Posterior cingulate gyrus (tissue), 11 donors: ENCODE measurements at regions of chr7 and their contacts with region 1.

Region 1: DNA sequence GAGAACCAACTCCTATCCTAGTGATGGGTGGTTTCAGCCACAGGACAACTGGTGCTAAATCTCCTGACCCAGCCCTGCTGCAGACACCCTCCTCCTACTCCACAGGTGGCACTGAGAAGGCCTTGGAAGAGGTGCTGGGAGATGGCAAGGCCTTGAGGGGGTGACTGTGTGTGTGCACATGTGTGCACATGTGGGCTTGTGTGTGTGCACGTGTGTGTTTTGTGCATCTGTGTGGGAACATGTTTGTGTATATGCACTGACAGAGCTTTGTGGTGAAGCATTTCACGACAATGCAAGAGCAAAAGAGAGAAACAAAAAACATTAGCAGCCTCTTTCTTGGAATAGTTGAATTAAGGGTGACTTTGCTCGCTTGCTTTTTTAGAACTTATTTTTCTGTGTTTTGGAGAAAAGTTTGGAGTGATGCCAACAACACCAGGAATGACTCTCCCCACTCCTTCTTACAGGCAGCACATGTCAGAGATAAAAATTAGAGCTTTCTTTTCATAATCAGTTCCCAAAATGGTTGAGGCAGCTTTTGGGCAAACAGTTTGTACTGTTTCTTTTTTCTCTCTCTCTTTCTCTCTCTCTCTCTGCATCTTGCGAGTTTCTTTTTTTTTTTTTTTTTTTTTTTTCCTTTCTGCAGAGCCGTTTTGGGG is 69.5 kb downstream of the SEC61G start:
- DNase-seq: no peak

Region 2: GRCh38 chr7:54743580-54743979 is 54.1 kb after region 1 on chr7:
- intact Hi-C with region 1: loop called (anchors 10 kb)
- DNase-seq: no peak

Region 3: GRCh38 chr7:54758702-54759592 is 69.4 kb after region 1 on chr7 and contains the start of gene SEC61G:
- intact Hi-C with region 1: no loop called
- DNase-seq: peak; percentile 94 to 99 (median 96)

Region 4: DNA sequence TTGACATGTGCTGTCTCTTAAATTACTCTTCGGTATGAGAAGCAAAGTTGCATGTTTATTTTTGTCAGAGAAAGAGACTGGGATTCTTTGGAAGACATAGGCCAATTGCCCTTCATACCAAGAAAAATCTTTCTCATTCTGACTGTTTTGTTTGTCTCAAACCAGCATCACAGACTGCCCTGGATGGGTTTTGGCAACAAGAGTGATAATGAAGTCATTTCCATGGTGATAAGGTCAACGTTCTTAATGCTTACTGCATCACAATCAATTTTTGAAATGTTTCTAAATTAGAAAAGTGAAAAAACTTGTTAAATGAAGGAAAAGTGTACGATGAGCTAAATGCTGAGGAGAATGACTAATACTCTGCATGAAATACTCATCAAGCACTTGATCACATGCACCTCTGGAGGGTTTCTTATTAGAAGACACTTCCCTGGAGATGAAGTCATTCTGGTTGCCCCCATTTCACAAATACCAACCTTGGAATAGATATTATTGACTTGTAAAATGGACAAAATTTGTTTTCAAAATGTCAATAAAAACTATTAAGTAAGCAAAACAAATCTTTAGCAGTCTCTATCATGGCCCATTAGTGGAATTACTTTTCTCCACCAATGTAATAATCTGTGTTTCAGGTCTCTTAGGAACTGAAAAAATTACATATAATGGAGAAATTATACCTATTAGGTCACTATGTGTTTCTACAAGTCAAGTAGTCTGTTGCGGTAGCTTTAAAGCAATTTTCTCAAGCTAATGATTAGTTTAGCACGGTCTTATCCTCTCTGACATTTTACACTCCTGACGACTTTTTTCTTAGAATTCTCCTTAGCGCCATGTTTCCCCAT is 89.4 kb after region 1 on chr7:
- intact Hi-C with region 1: no loop called
- DNase-seq: no peak

Region 5: DNA sequence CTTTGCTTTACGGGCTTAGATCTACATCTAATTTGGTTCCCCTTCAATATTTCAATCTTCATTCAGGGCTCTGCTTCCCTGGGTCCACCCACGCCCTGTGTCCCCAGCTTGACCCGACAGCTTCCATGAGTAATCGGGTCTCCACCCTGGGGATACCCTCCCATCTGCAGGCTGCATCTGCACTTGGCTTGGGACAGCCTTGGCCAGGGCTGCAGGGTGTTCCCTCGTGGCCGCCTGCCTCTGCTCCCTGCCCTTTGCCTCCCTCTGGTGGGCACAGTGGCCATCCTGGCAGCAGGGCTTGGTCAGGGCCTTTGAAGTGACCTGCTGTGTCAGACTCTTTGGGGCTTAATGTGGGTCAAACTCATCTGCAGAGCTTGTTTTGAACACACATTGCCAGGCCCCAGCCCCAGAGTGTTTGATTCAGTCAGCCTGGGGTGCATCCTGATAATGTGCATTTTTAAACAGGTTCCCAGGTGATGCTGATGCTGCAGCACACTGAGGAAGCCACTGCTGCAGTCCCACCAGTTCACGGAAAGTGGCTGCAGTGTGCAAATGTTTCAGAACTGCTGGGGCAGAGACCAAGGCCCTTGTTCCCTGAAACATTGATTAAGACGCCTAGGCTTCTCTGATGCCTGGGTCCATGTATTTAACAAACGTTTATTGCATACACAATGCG is 150.2 kb after region 1 on chr7:
- intact Hi-C with region 1: no loop called
- DNase-seq: peak in 7 of 10 donors; percentile 31 to 86 (median 49)